ENCODE measurements at regions of chr13 and their contacts with region 1.

Region 1: DNA sequence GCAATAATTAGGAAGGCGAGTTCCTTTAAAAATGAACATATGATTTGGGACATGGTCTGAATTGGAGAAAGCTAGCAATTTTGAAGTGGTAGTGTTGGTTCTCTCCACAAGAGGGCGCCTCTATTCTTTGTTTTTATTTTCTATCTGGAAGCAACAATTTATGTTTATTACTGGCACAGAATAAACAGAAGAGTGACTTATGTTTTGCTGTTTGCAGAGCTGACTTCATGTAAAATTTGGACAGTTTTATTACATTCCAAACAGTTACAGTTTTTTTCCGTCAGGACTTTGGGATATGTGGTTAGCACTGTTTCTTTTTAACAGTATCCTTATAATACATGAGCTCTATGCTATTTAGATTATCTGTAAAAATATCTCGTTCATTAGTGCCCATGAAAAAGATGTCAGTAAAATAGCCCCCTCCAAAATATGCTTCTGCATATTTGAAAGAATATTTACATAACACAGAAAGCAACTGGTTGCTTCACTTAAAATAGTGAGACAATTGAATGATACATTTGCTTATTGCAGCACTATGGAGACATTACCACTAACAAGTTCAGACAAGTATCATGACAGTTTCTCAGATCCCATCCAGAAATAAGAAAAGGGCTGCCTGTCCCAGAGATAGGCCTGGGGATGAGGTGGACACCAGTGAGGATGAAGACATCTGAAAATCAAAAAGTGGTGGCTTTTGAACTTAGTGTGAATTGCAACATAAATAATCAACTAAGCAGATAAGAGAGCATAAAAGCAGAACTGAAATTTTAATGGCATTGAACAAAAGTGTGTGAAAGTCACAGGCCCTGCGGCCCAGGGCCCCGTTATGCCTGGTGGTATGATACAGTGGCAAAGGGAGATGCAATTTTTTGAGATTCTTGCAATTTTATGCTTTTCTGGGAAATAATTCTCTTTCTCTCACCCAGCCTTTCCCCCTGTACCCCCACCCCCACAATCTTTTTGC is 32.3 kb upstream of the FGF9 start:
- DNase-seq: no peak
- ATAC-seq: no peak
- H3K4me3 Mint-ChIP-seq: no peak overlapping the region
- H3K27ac Mint-ChIP-seq: no peak overlapping the region
- H3K4me1 Mint-ChIP-seq: peaks cover 4% of the 10 kb centered on the region
- H3K27me3 Mint-ChIP-seq: peaks cover 10% of the 10 kb centered on the region

Region 2: DNA sequence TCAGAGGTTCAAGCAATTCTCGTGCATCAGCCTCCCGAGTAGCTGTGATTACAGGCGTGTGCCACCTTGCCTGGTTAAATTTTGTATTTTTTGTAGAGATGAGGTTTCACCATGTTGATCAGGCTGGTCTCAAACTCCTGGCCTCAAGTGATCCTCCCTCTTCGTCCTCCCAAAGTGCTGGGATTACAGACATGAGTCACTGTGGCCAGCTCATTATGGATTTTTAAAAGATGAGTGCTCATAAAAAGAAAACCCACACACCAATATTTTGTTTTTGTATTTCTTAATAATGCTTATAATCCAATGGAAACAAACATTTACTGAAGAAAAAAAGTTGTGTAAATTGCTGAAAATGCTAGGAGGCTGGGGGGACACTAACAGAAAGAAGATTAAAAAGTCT is 29.6 kb before region 1 on chr13:
- CTCF ChIA-PET with region 1: no interaction called
- DNase-seq: no peak
- ATAC-seq: no peak
- H3K4me3 Mint-ChIP-seq: no peak overlapping the region
- H3K27ac Mint-ChIP-seq: no peak overlapping the region
- H3K4me1 Mint-ChIP-seq: peaks cover 14% of the 10 kb centered on the region
- H3K27me3 Mint-ChIP-seq: peaks cover 7% of the 10 kb centered on the region

Region 3: DNA sequence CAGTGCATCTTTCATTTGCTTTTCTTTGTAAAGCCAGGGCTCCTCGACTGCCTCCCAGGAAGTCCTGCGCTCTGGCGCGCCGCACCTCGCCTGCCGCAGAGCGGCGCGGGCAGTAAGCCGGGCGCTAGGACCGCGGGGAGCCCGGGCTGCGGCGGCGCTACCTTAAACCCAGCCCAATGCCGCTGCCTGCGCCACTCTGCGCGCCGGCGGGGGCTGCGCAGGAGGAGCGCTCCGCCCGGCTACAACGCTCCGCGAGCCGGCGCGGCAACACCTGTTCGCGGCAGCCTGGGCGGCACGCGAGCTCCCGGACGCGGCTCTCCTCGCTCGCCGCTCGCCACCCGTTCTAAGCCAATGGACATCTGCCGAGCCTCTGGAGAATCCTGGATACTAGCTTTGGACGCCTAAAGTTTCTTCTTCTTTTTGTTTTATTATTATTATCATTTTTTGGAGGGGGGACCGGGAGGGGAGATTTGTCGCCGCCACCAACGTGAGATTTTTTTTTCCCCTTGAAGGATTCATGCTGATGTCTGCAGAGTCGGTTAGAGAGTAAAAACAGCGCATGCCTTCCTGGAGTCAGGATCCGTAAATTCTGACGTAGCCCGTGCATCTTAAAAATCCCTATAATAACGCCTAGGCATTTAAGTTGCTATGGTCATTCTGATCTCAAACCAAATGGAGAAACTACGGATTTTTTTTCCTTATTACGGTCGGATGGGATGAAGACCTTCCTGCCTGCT is 32.5 kb after region 1 on chr13 and contains the start of gene FGF9:
- CTCF ChIA-PET with region 1: interaction called, 37 read pairs
- DNase-seq: peak; percentile 85
- ATAC-seq: peak; percentile 73
- H3K4me3 Mint-ChIP-seq: peak within 1 kb of the TSS; percentile 79
- H3K27ac Mint-ChIP-seq: peak within 1 kb of the TSS; percentile 76
- H3K4me1 Mint-ChIP-seq: peaks cover 41% of the 10 kb centered on the region
- H3K27me3 Mint-ChIP-seq: peaks cover 47% of the 10 kb centered on the region
- total RNA-seq, gene FGF9: 0.89 to 0.99 TPM

Region 4: DNA sequence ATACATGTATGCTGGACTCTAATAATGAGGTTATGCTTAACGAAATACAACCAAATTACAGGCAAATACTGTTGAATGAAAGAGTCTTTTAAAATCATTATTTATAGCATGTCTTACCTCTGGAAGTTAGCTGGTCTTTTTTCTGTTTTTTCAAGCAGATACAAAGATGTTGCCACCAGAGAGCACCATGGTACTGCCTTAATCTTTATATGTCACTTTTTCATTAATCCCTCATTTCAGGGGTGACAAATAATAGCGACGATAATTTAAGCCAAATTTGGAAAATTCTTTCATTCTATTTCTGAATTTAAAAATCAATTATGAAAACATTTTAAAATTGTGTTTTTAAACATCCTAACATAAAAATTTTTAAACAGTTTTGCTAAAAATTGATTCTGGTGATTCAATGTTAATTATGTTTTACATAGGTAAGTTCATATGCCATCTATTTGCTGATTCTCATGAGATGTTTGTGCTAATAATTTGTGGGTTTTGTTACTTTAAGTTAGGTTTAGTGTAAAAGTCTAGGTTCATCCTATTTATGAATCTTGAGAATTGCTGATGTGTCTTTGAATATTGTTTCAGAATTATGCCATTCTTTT is 1162.9 kb after region 1 on chr13:
- CTCF ChIA-PET with region 1: interaction called, 10 read pairs
- DNase-seq: no peak
- ATAC-seq: no peak
- H3K4me3 Mint-ChIP-seq: no peak overlapping the region
- H3K27ac Mint-ChIP-seq: no peak overlapping the region
- H3K4me1 Mint-ChIP-seq: no peaks in the 10 kb centered on the region
- H3K27me3 Mint-ChIP-seq: peaks cover 14% of the 10 kb centered on the region